Activated B cell treated with CpG ODN at 0.5 μM for 24 hours (primary cell): ENCODE measurements at regions of chr22 and their contacts with region 1.

Region 1: DNA sequence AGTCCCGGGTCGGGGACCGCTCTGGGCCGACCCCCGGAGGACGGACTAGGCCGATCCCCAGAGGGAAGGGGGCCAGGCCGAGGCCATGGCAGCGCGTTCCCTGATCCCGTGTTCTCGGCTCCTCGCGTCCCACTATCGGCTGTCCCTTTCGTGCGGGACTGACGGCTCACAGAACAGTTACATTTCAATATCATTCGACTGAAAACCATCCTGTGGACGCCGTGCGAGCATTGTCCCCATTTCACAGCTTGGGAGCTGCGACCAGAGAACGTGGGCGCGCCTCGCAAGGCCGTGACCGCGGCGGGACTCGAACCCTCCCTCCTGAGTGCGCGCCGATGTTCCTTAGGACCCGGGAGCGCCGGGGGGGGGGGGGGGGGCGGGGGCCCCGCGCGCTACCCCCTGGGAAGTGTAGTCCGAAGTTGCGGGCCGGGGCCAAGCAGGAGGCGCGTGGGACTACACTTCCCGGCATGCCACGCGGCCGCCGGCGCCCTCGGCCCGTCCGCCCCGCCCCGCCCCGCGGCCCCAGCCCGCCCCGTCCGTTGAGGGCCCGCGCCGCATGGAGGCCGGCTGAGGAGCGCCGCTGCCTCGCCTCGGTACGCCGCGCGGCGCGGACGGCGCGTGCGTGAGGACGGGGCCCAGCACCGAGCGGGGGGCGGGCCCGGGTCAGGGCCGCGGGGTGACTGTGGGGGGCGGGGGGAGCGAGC is at the start of gene TRABD:
- DNase-seq: peak; percentile 87
- ATAC-seq: peak; percentile 59
- H3K4me3 Mint-ChIP-seq: peak within 1 kb of the TSS; percentile 93
- H3K27ac Mint-ChIP-seq: peak within 1 kb of the TSS; percentile 84
- H3K4me1 Mint-ChIP-seq: peaks cover 42% of the 10 kb centered on the region
- H3K27me3 Mint-ChIP-seq: peaks cover 2% of the 10 kb centered on the region
- CTCF ChIP-seq: no peak
- total RNA-seq, gene TRABD: 80.6 and 86.4 TPM in 2 replicates

Region 2: GRCh38 chr22:49827853-49828598 is 357.5 kb before region 1 on chr22 and contains the start of gene BRD1:
- CTCF ChIA-PET with region 1: no interaction called
- POLR2A ChIA-PET with region 1: no interaction called
- intact Hi-C with region 1: loop called (anchors 5 kb)
- DNase-seq: peak; percentile 66
- ATAC-seq: peak; percentile 78
- H3K4me3 Mint-ChIP-seq: peak within 1 kb of the TSS; percentile 84
- H3K27ac Mint-ChIP-seq: peak within 1 kb of the TSS; percentile 63
- H3K4me1 Mint-ChIP-seq: peaks cover 47% of the 10 kb centered on the region
- H3K27me3 Mint-ChIP-seq: peaks cover 4% of the 10 kb centered on the region
- CTCF ChIP-seq: no peak
- total RNA-seq, gene BRD1: 37.5 and 45.8 TPM in 2 replicates

Region 3: GRCh38 chr22:49960159-49961004 is 225.2 kb before region 1 on chr22 and contains the start of gene PIM3:
- CTCF ChIA-PET with region 1: no interaction called
- POLR2A ChIA-PET with region 1: interaction called, 34 read pairs
- intact Hi-C with region 1: loop called (anchors 1 kb)
- DNase-seq: peak; percentile 89
- ATAC-seq: peak; percentile 79
- H3K4me3 Mint-ChIP-seq: peak within 1 kb of the TSS; percentile 91
- H3K27ac Mint-ChIP-seq: peak within 1 kb of the TSS; percentile 90
- H3K4me1 Mint-ChIP-seq: peaks cover 38% of the 10 kb centered on the region
- H3K27me3 Mint-ChIP-seq: no peaks in the 10 kb centered on the region
- CTCF ChIP-seq: no peak
- total RNA-seq, gene PIM3: 79.8 and 91.7 TPM in 2 replicates

Region 4: DNA sequence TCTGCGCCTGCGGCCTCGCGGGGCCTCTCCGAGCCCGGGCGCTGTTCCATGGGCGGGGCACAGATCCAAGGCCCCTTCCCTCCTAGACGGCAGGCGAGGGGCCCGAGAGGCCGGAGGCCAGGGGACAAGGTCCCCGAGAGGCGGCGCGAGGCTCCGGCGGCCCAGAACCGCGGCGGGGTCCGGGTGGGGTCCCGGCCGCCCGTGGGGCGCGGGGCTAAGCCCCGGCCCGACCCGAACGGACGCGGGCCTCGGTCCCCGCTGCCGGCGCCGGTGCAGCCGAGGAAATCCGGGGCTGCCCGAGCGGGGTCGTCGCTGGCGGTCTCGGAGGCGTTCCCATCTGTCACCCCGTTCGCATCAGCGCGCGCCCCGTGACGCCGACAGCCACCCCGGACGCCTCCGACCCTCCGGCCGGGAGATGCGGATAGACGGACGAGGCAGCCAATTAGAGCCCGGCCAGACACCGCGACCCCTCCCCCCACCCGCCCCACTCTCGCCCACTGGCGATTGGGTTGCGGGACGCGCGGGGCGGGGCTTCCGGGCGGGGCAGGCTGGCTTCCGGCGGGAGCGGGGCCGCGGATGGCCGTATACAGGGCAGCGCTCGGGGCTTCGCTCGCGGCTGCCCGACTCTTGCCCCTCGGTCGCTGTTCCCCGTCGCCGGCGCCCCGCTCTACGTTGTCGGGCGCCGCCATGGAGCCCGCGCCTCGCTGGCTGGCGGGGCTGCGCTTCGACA is 15.1 kb after region 1 on chr22 and contains the start of gene SELENOO:
- CTCF ChIA-PET with region 1: interaction called, 3 read pairs
- POLR2A ChIA-PET with region 1: interaction called, 72 read pairs
- intact Hi-C with region 1: loop called (anchors 2 kb)
- DNase-seq: peak; percentile 88
- ATAC-seq: peak; percentile 93
- H3K4me3 Mint-ChIP-seq: peak within 1 kb of the TSS; percentile 85
- H3K27ac Mint-ChIP-seq: peak within 1 kb of the TSS; percentile 35
- H3K4me1 Mint-ChIP-seq: peaks cover 26% of the 10 kb centered on the region
- H3K27me3 Mint-ChIP-seq: no peaks in the 10 kb centered on the region
- CTCF ChIP-seq: no peak
- total RNA-seq, gene SELENOO: 33.9 and 39.0 TPM in 2 replicates

Region 5: DNA sequence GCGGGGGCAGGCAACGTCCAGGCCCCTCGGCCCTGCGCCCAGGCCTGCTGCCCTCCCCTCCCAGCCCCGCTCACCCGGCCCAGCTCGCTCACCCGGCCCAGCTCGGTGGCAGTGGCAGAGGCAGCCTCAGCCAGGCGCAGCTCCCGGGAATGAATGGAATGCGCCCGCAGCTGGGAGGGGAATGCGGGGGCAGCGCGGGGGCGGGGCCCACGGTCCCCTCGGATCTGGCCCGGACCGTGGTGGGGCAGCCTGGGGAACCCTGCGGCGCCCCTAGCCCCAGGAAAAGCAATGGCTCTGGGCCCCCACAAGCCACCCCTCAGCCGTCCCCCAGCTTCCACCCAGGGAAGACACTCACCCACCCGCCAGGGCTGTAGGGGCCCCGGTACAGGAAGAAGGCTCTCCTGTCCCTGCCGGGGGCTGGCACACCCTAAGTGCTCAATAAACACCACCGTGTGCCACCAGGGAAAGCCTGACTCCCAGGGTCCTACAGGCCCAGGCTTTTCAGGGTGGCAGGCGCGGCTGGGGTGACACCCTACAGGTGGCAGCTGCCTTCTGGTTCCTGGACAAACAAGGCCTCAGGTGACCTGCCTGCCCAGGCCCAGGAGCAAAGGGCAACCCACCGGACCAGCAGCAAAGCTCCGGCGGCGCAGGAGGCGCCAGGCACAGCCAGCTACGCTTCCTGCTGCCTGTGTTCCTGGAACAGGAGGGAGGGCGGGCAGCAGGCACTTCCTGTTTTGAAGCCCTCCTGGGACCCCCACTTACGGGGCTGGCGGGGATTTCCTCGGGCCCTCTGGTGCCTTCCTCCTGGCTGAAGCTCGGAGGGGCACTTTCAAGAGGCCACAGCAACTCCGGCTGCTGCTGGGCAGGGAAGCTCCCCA is 108.1 kb after region 1 on chr22:
- CTCF ChIA-PET with region 1: no interaction called
- POLR2A ChIA-PET with region 1: interaction called, 10 read pairs
- intact Hi-C with region 1: no loop called
- DNase-seq: no peak
- ATAC-seq: peak; percentile 51
- H3K4me3 Mint-ChIP-seq: peak overlapping the region; percentile 56
- H3K27ac Mint-ChIP-seq: no peak overlapping the region
- H3K4me1 Mint-ChIP-seq: peaks cover 47% of the 10 kb centered on the region
- H3K27me3 Mint-ChIP-seq: peaks cover 6% of the 10 kb centered on the region
- CTCF ChIP-seq: no peak

Region 6: DNA sequence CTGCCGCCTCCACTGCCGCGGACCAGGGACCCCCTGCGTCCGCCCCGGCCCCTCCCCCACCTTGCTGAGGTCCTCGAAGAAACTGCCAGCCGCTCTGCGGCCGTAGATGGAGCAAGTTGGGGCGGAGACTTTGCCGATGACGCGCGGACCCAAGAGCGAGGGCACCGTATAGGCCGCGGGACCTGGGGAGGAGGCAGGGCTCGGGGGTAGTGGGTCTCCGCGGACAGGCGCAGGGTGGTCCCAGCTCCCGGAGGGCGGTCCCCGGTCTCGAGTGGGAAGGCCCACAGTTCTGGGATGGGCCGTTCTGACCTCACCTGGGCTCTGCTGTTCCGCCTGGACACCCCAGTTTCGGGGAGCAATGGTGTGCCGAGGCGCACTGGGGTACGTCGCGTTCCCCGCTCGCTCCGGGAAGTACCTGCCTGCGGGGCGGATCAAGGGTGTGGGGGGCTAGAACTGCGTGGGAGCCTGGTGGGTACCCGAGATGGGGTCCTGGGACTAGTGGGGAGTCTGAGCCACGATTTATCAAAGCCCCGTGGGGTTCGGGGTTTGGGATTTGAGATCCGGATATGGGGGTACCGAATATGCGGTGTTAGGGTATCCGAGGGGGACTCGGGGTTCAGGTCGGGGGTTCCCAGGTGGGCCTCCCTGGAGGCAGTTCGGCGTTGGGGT is 345.5 kb after region 1 on chr22:
- CTCF ChIA-PET with region 1: interaction called, 3 read pairs
- POLR2A ChIA-PET with region 1: interaction called, 18 read pairs
- intact Hi-C with region 1: loop called (anchors 2 kb)
- DNase-seq: peak; percentile 86
- ATAC-seq: peak; percentile 53
- H3K4me3 Mint-ChIP-seq: peak overlapping the region; percentile 92
- H3K27ac Mint-ChIP-seq: peak overlapping the region; percentile 99
- H3K4me1 Mint-ChIP-seq: peaks cover 55% of the 10 kb centered on the region
- H3K27me3 Mint-ChIP-seq: no peaks in the 10 kb centered on the region
- CTCF ChIP-seq: no peak